Motor neuron (in vitro differentiated cells): ENCODE measurements at regions of chr20 and their contacts with region 1.

Region 1: GRCh38 chr20:38221119-38221589 is 39.4 kb downstream of the KIAA1755 start:
- ATAC-seq: peak; percentile 66 to 91 (median 85)
- H3K4me3 ChIP-seq: no peak overlapping the region
- H3K27ac ChIP-seq: no peak overlapping the region
- H3K4me1 ChIP-seq: peaks cover 0 to 2% of the 10 kb centered on the region in 2 donors

Region 2: GRCh38 chr20:38057351-38057972 is 163.7 kb before region 1 on chr20:
- in situ Hi-C with region 1: loop called in 2 of 9 experiments (anchors 25 kb)
- ATAC-seq: peak; percentile 92 to 98 (median 96)
- H3K4me3 ChIP-seq: no peak overlapping the region
- H3K27ac ChIP-seq: no peak overlapping the region
- H3K4me1 ChIP-seq: peaks cover 0 to 3% of the 10 kb centered on the region in 2 donors